ENCODE measurements at regions of chr18 and their contacts with region 1.

Region 1: DNA sequence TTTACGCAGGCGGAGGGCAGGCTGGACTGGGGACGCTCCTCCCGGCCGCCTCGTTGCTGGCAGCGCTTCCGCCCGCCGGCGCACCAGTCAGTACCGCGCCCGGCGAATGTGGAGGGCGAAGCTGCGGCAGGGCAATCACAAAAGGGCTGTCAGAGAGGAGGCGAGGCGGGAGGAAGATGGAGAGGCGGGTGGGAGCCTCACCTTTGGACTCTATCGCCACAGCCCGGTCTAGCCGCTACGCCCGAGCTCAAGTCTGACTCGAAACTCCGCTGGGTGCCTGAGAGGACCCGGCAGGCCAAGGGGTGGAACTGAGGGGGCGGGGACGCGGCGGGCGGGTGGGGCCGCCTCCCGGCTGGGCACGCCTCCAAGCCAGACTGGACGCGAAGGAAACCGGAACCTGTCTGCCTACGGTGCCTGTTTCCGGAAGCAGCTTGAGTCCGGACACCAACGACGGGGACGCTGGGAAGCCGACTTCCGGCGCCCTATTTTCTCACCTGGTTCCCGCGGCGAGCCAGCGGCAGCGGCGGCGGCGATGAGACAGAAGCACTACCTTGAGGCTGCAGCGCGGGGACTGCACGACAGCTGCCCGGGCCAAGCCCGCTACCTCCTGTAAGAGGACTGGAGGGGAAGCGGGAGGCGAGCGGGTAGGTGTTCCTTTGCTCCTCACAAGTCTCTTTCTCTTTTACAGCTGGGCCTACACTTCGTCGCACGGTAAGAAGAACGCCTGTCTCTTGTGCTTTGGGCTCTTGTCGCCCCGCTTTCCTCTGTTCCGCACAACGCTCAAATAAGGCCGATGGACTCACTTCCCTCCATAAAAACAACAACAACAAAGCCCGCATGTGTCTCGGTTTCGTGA is at the start of gene RMP24:
- DNase-seq: peak; percentile 94
- ATAC-seq: peak; percentile 94
- H3K4me3 ChIP-seq: peak within 1 kb of the TSS; percentile 85 to 98 (median 94)
- H3K4me3 Mint-ChIP-seq: peak within 1 kb of the TSS; percentile 91
- H3K27ac ChIP-seq: peak within 1 kb of the TSS; percentile 79 to 90
- H3K27ac Mint-ChIP-seq: peak within 1 kb of the TSS; percentile 93
- H3K4me1 ChIP-seq: peaks cover 20 to 38% of the 10 kb centered on the region in 2 donors
- H3K4me1 Mint-ChIP-seq: peaks cover 53% of the 10 kb centered on the region
- H3K27me3 ChIP-seq: no peaks in the 10 kb centered on the region
- H3K27me3 Mint-ChIP-seq: no peaks in the 10 kb centered on the region
- CTCF ChIP-seq: no peak

Region 2: DNA sequence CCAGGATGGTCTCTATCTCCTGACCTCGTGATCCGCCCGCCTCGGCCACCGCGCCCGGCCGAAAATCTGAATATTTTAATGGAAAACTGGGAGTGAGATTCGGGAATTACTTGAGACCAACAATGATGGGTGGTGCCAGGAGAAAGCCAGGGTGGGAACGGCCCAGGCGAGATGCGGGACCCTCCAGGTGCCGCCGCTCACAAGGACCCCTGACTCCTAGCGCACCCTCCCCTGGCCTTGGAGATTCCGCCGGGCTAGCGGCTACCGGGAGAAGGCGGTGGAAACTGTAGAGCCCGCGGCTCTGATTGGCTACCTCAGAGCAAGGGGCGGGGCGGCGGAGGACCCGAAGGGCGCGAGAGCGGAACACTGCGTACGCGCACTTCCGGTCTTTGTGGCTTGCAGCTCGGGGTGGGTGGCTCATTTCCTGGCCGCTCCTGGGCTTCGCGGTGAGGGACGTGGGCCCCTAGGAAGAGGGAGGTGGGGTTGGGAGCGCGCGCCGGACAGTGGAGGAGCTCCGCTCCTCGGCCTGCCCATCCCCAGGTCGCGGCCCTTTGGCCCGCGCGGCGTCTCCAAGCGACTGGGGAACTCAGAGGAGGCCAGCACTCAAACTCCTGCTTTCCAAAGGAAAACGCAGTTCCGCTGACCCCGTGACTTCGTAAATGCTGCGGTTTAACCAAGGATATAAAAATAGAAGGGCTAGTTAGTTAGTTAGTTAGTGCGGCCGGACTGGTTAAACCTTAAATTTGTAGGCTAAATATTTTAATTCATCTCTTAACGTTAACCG is 731.6 kb before region 1 on chr18 and contains the start of gene ZNF397:
- CTCF ChIA-PET with region 1: no interaction called
- POLR2A ChIA-PET with region 1: interaction called, 3 read pairs
- intact Hi-C with region 1: loop called (anchors 1 kb)
- DNase-seq: peak; percentile 97
- ATAC-seq: peak; percentile 98
- H3K4me3 ChIP-seq: peak within 1 kb of the TSS; percentile 79 to 95 (median 91)
- H3K4me3 Mint-ChIP-seq: peak within 1 kb of the TSS; percentile 91
- H3K27ac ChIP-seq: peak within 1 kb of the TSS; percentile 97
- H3K27ac Mint-ChIP-seq: peak within 1 kb of the TSS; percentile 99
- H3K4me1 ChIP-seq: peaks cover 10 to 12% of the 10 kb centered on the region in 2 donors
- H3K4me1 Mint-ChIP-seq: peaks cover 29% of the 10 kb centered on the region
- H3K27me3 ChIP-seq: no peaks in the 10 kb centered on the region
- H3K27me3 Mint-ChIP-seq: no peaks in the 10 kb centered on the region
- CTCF ChIP-seq: no peak
- total RNA-seq, gene ZNF397: 63.0 and 67.2 TPM in 2 replicates

Region 3: DNA sequence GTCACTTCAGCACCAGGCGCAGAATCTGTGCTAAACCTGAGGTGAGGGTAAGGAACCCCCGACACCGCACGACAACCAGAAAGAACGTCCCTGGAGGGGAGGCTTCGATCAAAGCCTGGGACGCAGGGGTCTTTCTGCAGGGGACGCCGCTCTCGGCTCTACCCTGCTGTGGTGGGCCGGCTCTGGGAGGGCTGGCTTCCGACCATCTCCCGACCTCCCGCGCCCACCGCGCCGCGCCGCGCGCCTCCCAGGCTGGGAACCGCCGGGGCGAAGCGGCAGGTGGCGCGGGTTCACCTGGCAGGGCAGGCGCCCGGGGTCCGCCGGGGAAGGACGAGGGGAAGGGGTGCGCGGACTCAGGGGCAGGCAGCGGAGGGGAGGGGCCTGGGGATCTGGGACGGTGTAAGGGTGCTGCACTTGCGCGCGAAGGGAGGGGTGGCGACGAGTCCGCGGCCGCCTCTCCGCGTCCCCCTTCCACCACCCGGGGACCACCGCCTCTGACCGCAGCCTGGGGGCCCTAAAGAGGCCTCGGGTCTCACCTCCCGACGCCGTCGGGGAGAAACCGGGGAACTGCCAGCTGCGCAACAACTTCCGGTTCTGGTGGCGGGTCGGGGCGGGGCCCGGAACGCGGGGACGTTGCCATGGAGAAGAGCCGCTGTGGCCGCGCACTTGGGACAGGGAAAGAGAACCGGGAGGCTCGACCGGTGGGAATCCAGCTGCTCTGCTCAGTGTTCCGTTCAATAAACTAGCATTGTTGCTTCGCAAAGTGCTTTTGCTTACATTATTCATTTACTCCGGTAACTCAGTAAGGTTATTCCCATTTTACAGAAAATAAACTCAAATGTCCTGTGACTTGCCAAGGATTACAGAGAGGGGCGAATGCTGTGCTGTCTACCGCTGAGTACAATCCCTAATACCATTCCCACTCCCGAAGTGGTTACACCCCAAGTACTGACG is 595.4 kb before region 1 on chr18 and contains the start of gene ZNF396:
- CTCF ChIA-PET with region 1: no interaction called
- POLR2A ChIA-PET with region 1: no interaction called
- intact Hi-C with region 1: loop called (anchors 2 kb)
- DNase-seq: peak; percentile 82
- ATAC-seq: peak; percentile 69
- H3K4me3 ChIP-seq: peak within 1 kb of the TSS; percentile 63 to 88 (median 70)
- H3K4me3 Mint-ChIP-seq: peak within 1 kb of the TSS; percentile 93
- H3K27ac ChIP-seq: peak within 1 kb of the TSS in 1 of 2 donors; percentile 69
- H3K27ac Mint-ChIP-seq: peak within 1 kb of the TSS; percentile 88
- H3K4me1 ChIP-seq: peaks cover 7 to 10% of the 10 kb centered on the region in 2 donors
- H3K4me1 Mint-ChIP-seq: peaks cover 8% of the 10 kb centered on the region
- H3K27me3 ChIP-seq: no peaks in the 10 kb centered on the region
- H3K27me3 Mint-ChIP-seq: no peaks in the 10 kb centered on the region
- CTCF ChIP-seq: no peak
- total RNA-seq, gene ZNF396: 3.2 and 4.8 TPM in 2 replicates

Region 4: DNA sequence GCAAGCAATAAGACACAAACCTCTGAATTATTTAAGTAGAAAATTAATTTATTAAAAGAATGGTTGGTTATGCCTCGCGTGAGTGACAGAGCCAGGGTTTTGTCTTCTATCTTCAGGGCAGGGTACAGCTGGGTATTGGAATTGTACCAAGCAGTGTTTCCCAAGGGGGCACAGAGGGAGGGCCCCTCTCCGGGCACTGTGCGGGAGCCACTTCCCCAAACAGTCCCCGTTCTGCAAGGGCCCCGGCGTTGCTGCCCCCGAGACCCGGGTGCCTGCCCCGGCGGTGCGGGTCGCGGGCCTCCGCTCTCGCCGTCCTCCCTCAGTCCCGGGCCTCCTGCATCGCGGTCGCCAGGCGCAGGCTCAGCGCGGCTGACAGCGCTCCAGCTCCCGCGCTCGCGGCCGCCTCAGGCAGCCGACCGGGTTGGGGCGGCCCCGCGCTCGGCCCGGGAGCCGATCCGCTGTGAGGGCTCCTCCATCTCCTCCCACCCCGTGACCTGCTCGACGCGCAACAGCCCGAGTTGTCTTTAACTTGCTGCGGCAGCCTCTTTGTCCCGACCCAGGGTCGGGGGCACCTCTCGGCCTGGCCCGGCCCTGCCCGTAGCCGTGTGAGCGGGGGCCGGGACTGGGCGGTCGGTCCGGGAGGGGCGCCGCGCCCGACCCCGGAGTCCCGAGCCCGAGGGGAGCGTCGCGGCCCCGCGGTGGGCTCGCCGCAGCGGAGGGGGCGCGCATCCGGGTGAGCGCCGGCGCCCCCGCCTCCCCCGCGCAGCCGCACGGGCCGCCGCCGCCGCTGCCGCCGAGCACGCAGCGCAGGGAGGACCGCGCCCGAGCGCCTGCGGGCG is 391.5 kb before region 1 on chr18:
- CTCF ChIA-PET with region 1: no interaction called
- POLR2A ChIA-PET with region 1: no interaction called
- intact Hi-C with region 1: loop called (anchors 2 kb)
- DNase-seq: peak; percentile 88
- ATAC-seq: peak; percentile 65
- H3K4me3 ChIP-seq: peak overlapping the region; percentile 30 to 78 (median 65)
- H3K4me3 Mint-ChIP-seq: peak overlapping the region; percentile 84
- H3K27ac ChIP-seq: peak overlapping the region; percentile 69 to 86
- H3K27ac Mint-ChIP-seq: peak overlapping the region; percentile 88
- H3K4me1 ChIP-seq: peaks cover 15 to 16% of the 10 kb centered on the region in 2 donors
- H3K4me1 Mint-ChIP-seq: peaks cover 33% of the 10 kb centered on the region
- H3K27me3 ChIP-seq: no peaks in the 10 kb centered on the region
- H3K27me3 Mint-ChIP-seq: no peaks in the 10 kb centered on the region
- CTCF ChIP-seq: no peak

Region 5: GRCh38 chr18:36015629-36016028 is 43.2 kb after region 1 on chr18:
- CTCF ChIA-PET with region 1: interaction called, 3 read pairs
- POLR2A ChIA-PET with region 1: no interaction called
- intact Hi-C with region 1: loop called (anchors 2 kb)
- DNase-seq: peak; percentile 71
- ATAC-seq: peak; percentile 76
- H3K4me3 ChIP-seq: no peak overlapping the region
- H3K4me3 Mint-ChIP-seq: peak overlapping the region; percentile 3
- H3K27ac ChIP-seq: no peak overlapping the region
- H3K27ac Mint-ChIP-seq: peak overlapping the region; percentile 12
- H3K4me1 ChIP-seq: peaks cover 13 to 19% of the 10 kb centered on the region in 2 donors
- H3K4me1 Mint-ChIP-seq: peaks cover 24% of the 10 kb centered on the region
- H3K27me3 ChIP-seq: no peaks in the 10 kb centered on the region
- H3K27me3 Mint-ChIP-seq: no peaks in the 10 kb centered on the region
- CTCF ChIP-seq: no peak

Region 6: GRCh38 chr18:36099317-36099926 is 127.0 kb after region 1 on chr18:
- CTCF ChIA-PET with region 1: no interaction called
- POLR2A ChIA-PET with region 1: no interaction called
- intact Hi-C with region 1: no loop called
- DNase-seq: no peak
- ATAC-seq: no peak
- H3K4me3 ChIP-seq: no peak overlapping the region
- H3K4me3 Mint-ChIP-seq: no peak overlapping the region
- H3K27ac ChIP-seq: no peak overlapping the region
- H3K27ac Mint-ChIP-seq: no peak overlapping the region
- H3K4me1 ChIP-seq: no peaks in the 10 kb centered on the region
- H3K4me1 Mint-ChIP-seq: no peaks in the 10 kb centered on the region
- H3K27me3 ChIP-seq: no peaks in the 10 kb centered on the region
- H3K27me3 Mint-ChIP-seq: peaks cover 20% of the 10 kb centered on the region
- CTCF ChIP-seq: no peak

Region 7: GRCh38 chr18:36129300-36130038 is 157.0 kb after region 1 on chr18 and contains the starts of genes ELP2 and SLC39A6:
- CTCF ChIA-PET with region 1: no interaction called
- POLR2A ChIA-PET with region 1: interaction called, 10 read pairs
- intact Hi-C with region 1: loop called (anchors 1 kb)
- DNase-seq: peak; percentile 97
- ATAC-seq: peak; percentile 85
- H3K4me3 ChIP-seq: peak within 1 kb of the TSS; percentile 82 to 98 (median 90)
- H3K4me3 Mint-ChIP-seq: peak within 1 kb of the TSS; percentile 94
- H3K27ac ChIP-seq: peak within 1 kb of the TSS; percentile 97 to 99
- H3K27ac Mint-ChIP-seq: peak within 1 kb of the TSS; percentile 98
- H3K4me1 ChIP-seq: peaks cover 34 to 36% of the 10 kb centered on the region in 2 donors
- H3K4me1 Mint-ChIP-seq: peaks cover 53% of the 10 kb centered on the region
- H3K27me3 ChIP-seq: no peaks in the 10 kb centered on the region
- H3K27me3 Mint-ChIP-seq: no peaks in the 10 kb centered on the region
- CTCF ChIP-seq: no peak
- total RNA-seq, gene ELP2: 137 and 169 TPM in 2 replicates
- total RNA-seq, gene SLC39A6: 18.2 and 19.5 TPM in 2 replicates

Region 8: DNA sequence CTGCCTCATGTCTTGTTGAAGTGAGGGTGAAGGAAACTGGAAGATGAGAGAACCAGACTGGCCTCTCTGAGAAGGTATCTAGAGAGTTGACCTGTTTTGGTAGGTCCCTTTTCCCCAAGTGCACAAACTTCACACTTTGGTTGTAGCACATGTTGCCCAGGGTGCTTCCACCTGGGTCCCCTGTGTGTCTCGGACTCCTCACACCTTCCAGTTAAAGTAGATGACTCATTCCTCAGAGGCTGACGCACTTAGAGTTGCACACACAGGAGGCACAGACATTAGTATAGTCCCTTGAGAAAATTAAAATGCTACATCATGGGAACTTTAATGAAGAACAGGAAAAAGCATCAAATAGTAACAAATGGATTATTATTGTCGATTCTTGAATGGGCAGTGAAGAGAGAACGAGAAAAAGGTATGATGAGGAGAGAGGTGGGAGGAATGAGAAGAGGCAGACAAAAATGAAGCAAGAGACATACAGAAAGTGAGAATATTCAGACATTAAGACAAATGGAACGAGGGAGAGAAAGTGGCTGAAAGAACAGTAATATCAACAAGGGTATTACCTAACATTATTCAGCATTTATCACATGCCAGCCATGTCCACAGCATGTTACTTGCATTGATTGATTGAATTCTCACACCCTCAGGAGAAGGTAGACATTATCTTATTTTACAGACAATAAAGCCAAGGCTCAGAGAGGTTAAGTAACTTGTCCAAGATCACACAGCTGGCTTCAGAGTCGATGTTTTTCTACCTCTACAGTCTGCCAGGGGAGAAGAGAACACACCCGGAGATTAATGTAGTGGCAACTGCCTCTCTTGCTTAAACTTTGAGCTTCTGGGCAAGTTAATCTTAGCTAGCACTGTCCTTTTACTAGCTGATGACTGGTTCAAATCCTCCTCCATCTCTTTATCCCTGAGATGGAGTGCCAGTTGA is 393.7 kb after region 1 on chr18:
- CTCF ChIA-PET with region 1: no interaction called
- POLR2A ChIA-PET with region 1: no interaction called
- intact Hi-C with region 1: no loop called
- DNase-seq: no peak
- ATAC-seq: no peak
- H3K4me3 ChIP-seq: no peak overlapping the region
- H3K4me3 Mint-ChIP-seq: no peak overlapping the region
- H3K27ac ChIP-seq: no peak overlapping the region
- H3K27ac Mint-ChIP-seq: no peak overlapping the region
- H3K4me1 ChIP-seq: no peaks in the 10 kb centered on the region
- H3K4me1 Mint-ChIP-seq: no peaks in the 10 kb centered on the region
- H3K27me3 ChIP-seq: peaks cover 0 to 3% (median 1%) of the 10 kb centered on the region in 4 experiments
- H3K27me3 Mint-ChIP-seq: peaks cover 18% of the 10 kb centered on the region
- CTCF ChIP-seq: no peak